MCF 10A (cell line): ENCODE measurements at regions of chr2 and their contacts with region 1.

Region 1: GRCh38 chr2:101175991-101176390 is 24.8 kb upstream of the TBC1D8 start:
- DNase-seq: no peak
- H3K4me3 Mint-ChIP-seq: no peak overlapping the region
- H3K27ac Mint-ChIP-seq: no peak overlapping the region
- H3K4me1 Mint-ChIP-seq: peaks cover 14% of the 10 kb centered on the region
- H3K27me3 Mint-ChIP-seq: no peaks in the 10 kb centered on the region
- CTCF ChIP-seq: no peak

Region 2: DNA sequence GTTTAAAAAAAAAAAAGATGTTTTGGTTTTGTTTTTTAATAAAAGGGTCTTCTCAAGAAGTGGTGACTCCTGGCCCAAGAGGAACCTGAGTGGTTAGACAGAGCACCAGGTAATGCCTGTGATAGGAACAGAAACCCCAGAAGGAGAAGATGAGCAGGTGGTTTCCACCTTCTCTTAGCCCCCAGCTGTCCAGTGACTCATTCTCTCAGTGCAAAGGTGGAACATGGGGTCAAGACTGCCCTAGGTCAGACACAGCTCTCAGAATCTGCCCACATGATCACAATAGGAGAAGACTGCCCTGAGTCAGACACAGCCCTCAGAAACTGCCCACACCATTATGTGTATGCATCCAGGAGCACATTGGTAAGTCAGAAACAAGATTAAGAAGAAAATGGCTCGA is 86.6 kb before region 1 on chr2:
- CTCF ChIA-PET with region 1: no interaction called
- POLR2A ChIA-PET with region 1: no interaction called
- intact Hi-C with region 1: no loop called
- DNase-seq: no peak
- H3K4me3 Mint-ChIP-seq: no peak overlapping the region
- H3K27ac Mint-ChIP-seq: no peak overlapping the region
- H3K4me1 Mint-ChIP-seq: peaks cover 22% of the 10 kb centered on the region
- H3K27me3 Mint-ChIP-seq: no peaks in the 10 kb centered on the region
- CTCF ChIP-seq: no peak

Region 3: GRCh38 chr2:101188683-101189405 is 12.9 kb after region 1 on chr2:
- CTCF ChIA-PET with region 1: interaction called, 6 read pairs
- POLR2A ChIA-PET with region 1: interaction called, 19 read pairs
- intact Hi-C with region 1: no loop called
- DNase-seq: peak; percentile 42
- H3K4me3 Mint-ChIP-seq: no peak overlapping the region
- H3K27ac Mint-ChIP-seq: no peak overlapping the region
- H3K4me1 Mint-ChIP-seq: peaks cover 16% of the 10 kb centered on the region
- H3K27me3 Mint-ChIP-seq: no peaks in the 10 kb centered on the region
- CTCF ChIP-seq: peak; percentile 31